AG04450 (cell line): ENCODE measurements at regions of chr4 and their contacts with region 1.

Region 1: DNA sequence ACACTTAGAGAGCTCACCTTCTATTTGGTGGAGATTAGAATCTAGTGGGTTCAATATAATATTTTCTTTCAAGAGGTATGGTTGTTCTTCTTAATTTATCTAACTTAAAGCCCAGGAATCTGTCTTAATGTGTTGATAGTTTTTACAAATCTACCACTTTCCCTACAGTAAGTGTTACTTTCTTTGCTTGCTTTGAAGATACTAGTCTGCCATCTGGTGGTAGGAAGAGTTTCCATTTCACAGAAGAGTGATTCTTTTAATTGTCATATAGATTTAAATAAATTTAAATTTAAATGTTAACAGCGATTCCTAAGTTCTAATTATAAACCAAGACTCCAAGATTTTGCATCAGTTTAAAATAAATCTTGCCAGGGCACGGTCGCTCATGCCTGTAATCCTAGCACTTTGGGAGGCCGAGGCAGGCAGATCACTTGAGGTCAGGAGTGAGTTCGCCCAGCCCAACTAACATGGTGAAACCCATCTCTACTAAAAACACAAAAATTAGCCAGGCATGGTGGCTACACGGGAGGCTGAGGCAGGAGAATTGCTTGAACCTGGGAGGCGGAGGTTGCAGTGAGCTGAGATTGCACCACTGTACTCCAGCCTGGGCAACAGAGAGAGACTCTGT is 43.5 kb downstream of the NUDT9 start:
- DNase-seq: peak; percentile 10
- H3K4me3 ChIP-seq: no peak overlapping the region
- H3K27ac ChIP-seq: no peak overlapping the region
- H3K27me3 ChIP-seq: no peaks in the 10 kb centered on the region
- CTCF ChIP-seq: peak; percentile 69

Region 2: GRCh38 chr4:87150498-87151261 is 315.2 kb before region 1 on chr4:
- CTCF ChIA-PET with region 1: interaction called, 13 read pairs
- POLR2A ChIA-PET with region 1: no interaction called
- DNase-seq: peak; percentile 32
- H3K4me3 ChIP-seq: no peak overlapping the region
- H3K27ac ChIP-seq: no peak overlapping the region
- H3K27me3 ChIP-seq: no peaks in the 10 kb centered on the region
- CTCF ChIP-seq: peak; percentile 84

Region 3: GRCh38 chr4:87270144-87270543 is 195.7 kb before region 1 on chr4:
- CTCF ChIA-PET with region 1: interaction called, 30 read pairs
- POLR2A ChIA-PET with region 1: no interaction called
- DNase-seq: peak; percentile 1
- H3K4me3 ChIP-seq: no peak overlapping the region
- H3K27ac ChIP-seq: no peak overlapping the region
- H3K27me3 ChIP-seq: peaks cover 11% of the 10 kb centered on the region
- CTCF ChIP-seq: peak; percentile 60

Region 4: DNA sequence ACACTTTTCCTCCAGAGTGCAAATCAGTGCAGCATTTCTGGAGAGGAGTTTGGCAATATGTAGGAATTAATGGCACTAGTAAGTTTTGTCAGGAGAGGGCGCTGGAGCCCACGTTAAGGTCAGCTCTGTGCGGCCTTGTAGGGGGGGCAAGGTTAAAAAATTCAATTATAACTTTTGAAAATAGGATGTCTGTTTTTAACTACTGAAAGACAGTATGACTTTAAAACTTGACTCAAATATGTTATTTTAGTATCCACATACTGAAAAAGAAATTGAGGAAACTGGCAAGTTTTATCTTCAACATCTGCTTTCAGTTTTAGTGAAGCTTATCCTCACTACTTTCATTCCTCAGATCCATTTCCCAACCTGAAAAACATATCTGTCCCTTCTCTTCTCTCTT is 112.3 kb before region 1 on chr4:
- CTCF ChIA-PET with region 1: interaction called, 30 read pairs
- POLR2A ChIA-PET with region 1: no interaction called
- DNase-seq: peak; percentile 10
- H3K4me3 ChIP-seq: no peak overlapping the region
- H3K27ac ChIP-seq: peak overlapping the region; percentile 11
- H3K27me3 ChIP-seq: no peaks in the 10 kb centered on the region
- CTCF ChIP-seq: peak; percentile 73

Region 5: DNA sequence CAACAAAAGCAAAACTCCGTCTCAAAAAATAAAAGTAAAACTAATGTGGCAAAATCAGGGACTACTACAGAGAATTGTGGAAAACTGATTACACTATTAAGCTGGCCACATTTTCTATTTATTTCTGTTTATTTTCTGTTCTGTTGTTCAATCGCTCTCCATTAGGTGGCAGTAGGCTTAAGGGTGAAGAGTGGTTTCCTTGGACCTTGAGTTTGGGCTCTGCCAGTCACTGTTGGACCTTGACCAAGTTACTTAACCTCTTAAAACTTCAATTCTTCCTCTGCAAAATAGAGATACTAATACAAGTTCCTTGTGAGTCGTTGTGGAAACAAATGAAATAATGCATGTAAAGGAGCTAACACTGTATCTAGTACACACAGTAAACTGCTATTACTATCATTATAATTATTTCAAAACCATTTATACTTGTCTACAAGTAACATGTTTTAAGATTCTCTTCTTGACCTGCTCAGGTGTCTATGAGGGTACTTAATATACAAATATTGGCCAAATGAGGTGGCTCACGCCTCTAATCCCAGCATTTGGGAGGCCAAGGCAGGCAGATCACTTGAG is 90.0 kb before region 1 on chr4:
- CTCF ChIA-PET with region 1: interaction called, 109 read pairs
- POLR2A ChIA-PET with region 1: no interaction called
- DNase-seq: peak; percentile 76
- H3K4me3 ChIP-seq: no peak overlapping the region
- H3K27ac ChIP-seq: peak overlapping the region; percentile 3
- H3K27me3 ChIP-seq: no peaks in the 10 kb centered on the region
- CTCF ChIP-seq: peak; percentile 82

Region 6: DNA sequence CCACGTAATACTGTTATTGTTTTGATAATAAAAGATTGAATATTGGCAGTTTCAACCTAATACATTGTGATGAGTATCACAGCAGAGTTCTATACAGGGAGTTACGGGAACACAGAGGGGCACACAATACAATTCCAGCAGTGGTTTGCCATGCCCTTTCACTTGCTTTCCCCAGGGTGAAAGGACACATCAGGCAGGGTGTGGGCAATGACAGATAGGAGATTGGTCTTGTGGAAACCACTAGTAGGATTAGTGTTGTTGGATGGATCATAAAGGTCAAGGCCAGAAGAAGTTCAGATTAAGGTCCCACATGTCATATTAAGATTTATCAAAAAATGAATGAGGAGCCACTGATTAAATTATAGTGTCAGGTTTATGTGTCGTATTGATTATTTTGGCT is 82.9 kb before region 1 on chr4:
- CTCF ChIA-PET with region 1: interaction called, 109 read pairs
- POLR2A ChIA-PET with region 1: no interaction called
- DNase-seq: no peak
- H3K4me3 ChIP-seq: no peak overlapping the region
- H3K27ac ChIP-seq: no peak overlapping the region
- H3K27me3 ChIP-seq: no peaks in the 10 kb centered on the region
- CTCF ChIP-seq: no peak

Region 7: GRCh38 chr4:87478732-87479250 is 12.9 kb after region 1 on chr4:
- CTCF ChIA-PET with region 1: interaction called, 11 read pairs
- POLR2A ChIA-PET with region 1: no interaction called
- DNase-seq: no peak
- H3K4me3 ChIP-seq: no peak overlapping the region
- H3K27ac ChIP-seq: no peak overlapping the region
- H3K27me3 ChIP-seq: no peaks in the 10 kb centered on the region
- CTCF ChIP-seq: no peak